CD4-positive, alpha-beta memory T cell (primary cell): ENCODE measurements at regions of chr5 and their contacts with region 1.

Region 1: DNA sequence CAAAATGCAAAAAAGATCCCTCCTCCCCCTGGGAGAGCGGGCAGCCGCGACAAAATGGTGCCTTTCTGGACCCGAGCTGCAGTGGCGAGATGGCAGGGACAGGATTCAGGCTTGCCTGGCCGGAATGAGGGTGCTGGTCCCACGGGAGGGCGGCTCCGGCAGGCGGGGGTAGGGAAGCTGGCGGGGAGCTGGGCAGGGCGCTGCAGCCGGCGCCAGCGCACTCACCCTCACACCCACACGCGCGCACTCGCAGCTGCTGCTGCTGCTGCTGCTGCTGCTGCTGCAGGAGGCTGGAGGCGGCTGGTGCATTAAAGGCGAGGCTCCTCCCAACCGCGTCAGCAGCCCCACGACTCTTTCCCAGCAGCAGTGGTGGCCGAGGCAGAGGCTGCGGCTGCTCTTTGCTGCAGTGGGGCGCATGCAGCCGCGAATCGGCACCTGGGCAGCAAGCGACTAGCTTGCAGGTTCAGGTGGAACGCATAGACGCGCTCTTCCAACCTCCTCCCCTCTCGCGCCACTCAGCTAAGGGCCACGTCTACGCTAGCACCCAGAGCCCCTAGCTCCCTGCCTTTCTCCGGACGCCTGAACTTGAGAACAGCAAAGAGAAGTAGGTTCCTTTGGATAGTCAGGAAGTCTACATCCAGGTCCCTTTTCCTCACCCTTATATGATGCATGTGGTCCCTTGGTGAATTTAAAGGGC is at the start of gene PPP2R2B:
- DNase-seq: peak; percentile 45 to 60 (median 46)
- H3K4me3 ChIP-seq: peak within 1 kb of the TSS; percentile 57 to 70
- H3K4me3 Mint-ChIP-seq: peak within 1 kb of the TSS; percentile 89 to 95 (median 92)
- H3K27ac ChIP-seq: peak within 1 kb of the TSS; percentile 39
- H3K27ac Mint-ChIP-seq: peak within 1 kb of the TSS; percentile 41 to 85 (median 69)
- H3K4me1 ChIP-seq: peaks cover 18% of the 10 kb centered on the region
- H3K4me1 Mint-ChIP-seq: peaks cover 16 to 27% (median 22%) of the 10 kb centered on the region in 4 donors
- H3K27me3 ChIP-seq: no peaks in the 10 kb centered on the region
- H3K27me3 Mint-ChIP-seq: peaks cover 9 to 11% of the 10 kb centered on the region in 2 donors
- total RNA-seq, gene PPP2R2B: 3.1 to 3.9 TPM

Region 2: DNA sequence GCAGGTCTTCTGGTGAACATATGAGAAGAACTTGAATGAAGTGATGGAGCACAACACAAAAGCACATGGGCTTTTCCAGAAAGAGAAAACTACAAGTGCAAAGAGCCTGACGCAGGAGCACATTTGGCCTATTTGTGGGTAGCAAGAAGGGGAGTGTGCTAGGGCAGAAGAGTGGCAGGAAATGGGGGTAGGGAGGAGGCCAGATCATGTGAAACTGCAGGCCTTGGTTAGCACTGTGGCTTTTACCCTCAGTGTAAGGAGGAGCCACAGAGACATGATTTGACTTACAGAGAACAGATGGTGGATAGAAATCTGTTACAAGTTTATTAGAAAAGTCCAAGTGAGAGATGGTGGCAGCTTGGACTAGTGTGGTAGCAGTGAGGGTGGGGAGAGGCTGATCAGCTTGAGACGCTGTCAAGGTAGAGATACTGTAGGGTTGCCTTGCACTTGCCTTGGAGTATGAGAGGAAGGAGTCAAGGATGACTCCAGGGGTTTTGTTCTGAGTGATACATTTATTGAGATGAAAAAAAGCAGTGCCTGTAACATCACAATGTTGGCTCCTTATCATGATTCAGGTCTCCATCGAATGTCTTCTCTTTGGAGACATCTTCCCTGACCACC is 126.7 kb before region 1 on chr5:
- CTCF ChIA-PET with region 1: no interaction called
- POLR2A ChIA-PET with region 1: interaction called, 6 read pairs
- intact Hi-C with region 1: loop called (anchors 1 kb)
- DNase-seq: peak; percentile 65 to 84 (median 78)
- H3K4me3 ChIP-seq: no peak overlapping the region
- H3K4me3 Mint-ChIP-seq: peak overlapping the region; percentile 67 to 80 (median 74)
- H3K27ac ChIP-seq: peak overlapping the region; percentile 50
- H3K27ac Mint-ChIP-seq: peak overlapping the region; percentile 81 to 97 (median 93)
- H3K4me1 ChIP-seq: peaks cover 54% of the 10 kb centered on the region
- H3K4me1 Mint-ChIP-seq: peaks cover 39 to 50% (median 46%) of the 10 kb centered on the region in 4 donors
- H3K27me3 ChIP-seq: no peaks in the 10 kb centered on the region
- H3K27me3 Mint-ChIP-seq: no peaks in the 10 kb centered on the region